ENCODE measurements at regions of chr12 and their contacts with region 1.

Region 1: DNA sequence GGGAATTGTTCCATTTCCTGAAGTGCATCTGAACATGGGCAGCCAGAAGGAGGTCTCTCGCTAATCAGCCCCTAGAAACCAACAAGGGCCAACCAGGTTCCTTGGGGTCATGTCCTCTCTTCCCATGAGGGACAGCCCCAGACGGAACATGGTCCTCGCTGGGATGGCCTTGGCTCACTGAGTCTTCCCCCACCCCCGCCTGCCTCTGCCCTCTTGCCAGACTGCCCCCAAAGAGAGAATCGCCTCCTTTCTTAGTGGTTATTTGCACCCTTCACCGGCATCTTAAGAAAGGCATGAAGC is 36.4 kb downstream of the CD9 start:
- DNase-seq: no peak
- H3K4me3 ChIP-seq: no peak overlapping the region
- H3K27ac ChIP-seq: no peak overlapping the region
- H3K4me1 ChIP-seq: no peaks in the 10 kb centered on the region
- H3K27me3 ChIP-seq: no peaks in the 10 kb centered on the region
- CTCF ChIP-seq: no peak

Region 2: GRCh38 chr12:5395443-5396271 is 840.9 kb before region 1 on chr12:
- CTCF ChIA-PET with region 1: no interaction called
- POLR2A ChIA-PET with region 1: no interaction called
- intact Hi-C with region 1: no loop called
- DNase-seq: peak; percentile 7
- H3K4me3 ChIP-seq: no peak overlapping the region
- H3K27ac ChIP-seq: no peak overlapping the region
- H3K4me1 ChIP-seq: no peaks in the 10 kb centered on the region
- H3K27me3 ChIP-seq: peaks cover 8% of the 10 kb centered on the region
- CTCF ChIP-seq: no peak

Region 3: GRCh38 chr12:6183689-6184428 is 52.7 kb before region 1 on chr12:
- CTCF ChIA-PET with region 1: no interaction called
- POLR2A ChIA-PET with region 1: no interaction called
- intact Hi-C with region 1: no loop called
- DNase-seq: no peak
- H3K4me3 ChIP-seq: no peak overlapping the region
- H3K27ac ChIP-seq: no peak overlapping the region
- H3K4me1 ChIP-seq: no peaks in the 10 kb centered on the region
- H3K27me3 ChIP-seq: no peaks in the 10 kb centered on the region
- CTCF ChIP-seq: no peak

Region 4: DNA sequence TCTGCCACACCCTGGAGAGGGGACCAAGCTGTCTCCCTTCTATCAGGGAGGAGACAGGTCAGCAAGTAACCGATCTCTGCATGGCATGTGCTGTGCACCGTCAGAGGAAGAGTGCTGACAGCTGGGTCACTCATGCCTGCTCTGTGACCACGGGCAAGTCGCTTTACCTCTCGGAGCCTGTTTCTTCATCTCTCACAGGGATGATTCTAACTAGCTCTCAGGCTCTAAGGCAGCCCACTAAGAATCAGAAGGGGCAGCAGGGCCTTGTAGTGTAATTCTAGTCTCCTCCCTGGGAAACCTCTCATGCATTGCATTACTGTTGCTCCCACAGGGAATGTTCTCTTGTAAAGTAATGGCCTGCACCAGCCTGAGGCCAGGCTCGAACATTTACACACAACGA is 24.5 kb before region 1 on chr12:
- CTCF ChIA-PET with region 1: no interaction called
- POLR2A ChIA-PET with region 1: interaction called, 10 read pairs
- intact Hi-C with region 1: no loop called
- DNase-seq: no peak
- H3K4me3 ChIP-seq: no peak overlapping the region
- H3K27ac ChIP-seq: no peak overlapping the region
- H3K4me1 ChIP-seq: no peaks in the 10 kb centered on the region
- H3K27me3 ChIP-seq: no peaks in the 10 kb centered on the region
- CTCF ChIP-seq: no peak

Measured in A673 (cell line).